Gastrocnemius medialis (tissue), 4 donors: ENCODE measurements at regions of chr16 and their contacts with region 1.

Region 1: DNA sequence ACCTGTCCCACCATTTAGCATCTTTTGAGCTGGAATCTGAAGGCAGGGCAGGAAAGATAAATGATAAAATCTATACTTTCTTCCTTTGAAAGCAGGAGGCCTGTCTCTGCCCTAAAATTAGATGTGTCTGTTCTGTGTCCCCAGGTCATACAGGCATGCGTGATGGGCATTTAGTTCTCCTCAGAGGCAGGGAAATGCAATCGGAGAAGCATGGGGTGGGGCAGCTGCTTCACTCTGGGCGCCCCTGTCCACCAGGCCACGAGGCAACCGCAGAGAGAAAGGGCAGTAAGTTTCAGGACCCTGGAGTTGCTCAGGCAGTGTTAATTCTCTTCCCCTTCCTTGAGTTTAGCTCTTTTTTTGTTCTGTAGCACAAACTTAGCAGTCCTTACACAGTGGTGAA is 25.1 kb downstream of the CLUAP1 start:
- DNase-seq: no peak
- ATAC-seq: no peak
- H3K4me3 ChIP-seq: no peak overlapping the region
- H3K27ac ChIP-seq: peak overlapping the region in 1 of 4 donors; percentile 16
- H3K4me1 ChIP-seq: no peaks in the 10 kb centered on the region
- H3K27me3 ChIP-seq: no peaks in the 10 kb centered on the region
- CTCF ChIP-seq: no peak
- POLR2A ChIP-seq: no peak

Region 2: GRCh38 chr16:3485821-3486505 is 40.0 kb before region 1 on chr16:
- in situ Hi-C with region 1: no loop called
- intact Hi-C with region 1: no loop called
- DNase-seq: no peak
- ATAC-seq: no peak
- H3K4me3 ChIP-seq: no peak overlapping the region
- H3K27ac ChIP-seq: no peak overlapping the region
- H3K4me1 ChIP-seq: peaks cover 0 to 6% of the 10 kb centered on the region in 2 donors
- H3K27me3 ChIP-seq: no peaks in the 10 kb centered on the region
- CTCF ChIP-seq: no peak
- POLR2A ChIP-seq: no peak

Region 3: GRCh38 chr16:3564130-3564888 is 38.4 kb after region 1 on chr16:
- in situ Hi-C with region 1: no loop called
- intact Hi-C with region 1: no loop called
- DNase-seq: no peak
- ATAC-seq: no peak
- H3K4me3 ChIP-seq: no peak overlapping the region
- H3K27ac ChIP-seq: no peak overlapping the region
- H3K4me1 ChIP-seq: no peaks in the 10 kb centered on the region
- H3K27me3 ChIP-seq: no peaks in the 10 kb centered on the region
- CTCF ChIP-seq: no peak
- POLR2A ChIP-seq: no peak

Region 4: DNA sequence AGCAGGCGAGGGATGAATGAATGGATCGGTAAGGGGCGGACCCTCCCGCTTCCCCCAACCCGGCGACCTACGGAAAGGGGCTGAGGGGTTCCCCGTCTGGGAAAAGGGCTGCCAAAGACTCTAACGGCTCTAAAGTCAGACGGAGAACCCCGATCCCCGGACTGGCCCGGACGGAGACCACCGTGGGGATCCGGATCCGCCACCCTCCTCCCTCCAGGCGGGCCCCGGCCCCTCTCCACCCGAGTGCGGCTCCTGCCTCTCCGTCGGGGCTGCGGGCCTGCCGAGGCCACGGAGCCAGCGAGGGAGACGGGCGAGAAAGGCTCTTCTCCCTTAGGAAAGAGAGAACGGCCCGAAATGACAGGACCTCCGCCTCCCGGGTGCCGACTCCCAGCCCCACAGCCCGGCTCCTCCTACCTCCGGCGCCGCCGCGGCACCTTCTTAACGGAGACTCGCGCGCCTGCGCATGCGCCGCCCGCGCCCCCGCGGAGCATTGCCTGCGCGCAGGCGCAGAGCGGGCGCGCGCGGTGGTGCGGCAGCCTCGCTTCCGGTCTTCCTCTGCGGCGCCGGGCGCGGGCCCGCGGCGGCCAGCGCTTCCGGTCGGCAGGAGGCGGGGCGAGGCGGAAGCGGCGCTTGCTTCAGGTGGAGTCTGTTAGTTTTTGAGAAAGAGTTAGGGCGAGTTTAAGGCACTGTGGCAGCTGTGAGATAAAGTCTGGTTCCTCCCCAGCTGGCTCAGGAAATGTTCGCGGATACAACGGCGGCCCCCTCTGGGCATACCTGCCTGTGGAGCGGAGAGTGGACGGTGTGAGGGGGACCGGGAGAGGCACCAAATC is 85.4 kb after region 1 on chr16 and contains the start of gene SLX4:
- in situ Hi-C with region 1: no loop called
- intact Hi-C with region 1: loop called (anchors 2 kb)
- DNase-seq: peak; percentile 72 to 86
- ATAC-seq: peak; percentile 91 to 96
- H3K4me3 ChIP-seq: peak within 1 kb of the TSS; percentile 86 to 100 (median 98)
- H3K27ac ChIP-seq: peak within 1 kb of the TSS; percentile 77 to 92 (median 88)
- H3K4me1 ChIP-seq: peaks cover 16 to 23% of the 10 kb centered on the region in 2 donors
- H3K27me3 ChIP-seq: no peaks in the 10 kb centered on the region
- CTCF ChIP-seq: no peak
- POLR2A ChIP-seq: peak; percentile 76 to 79
- total RNA-seq, gene SLX4: 1.8 to 3.6 (median 2.8) TPM